ENCODE measurements at regions of chr2 and their contacts with region 1.

Region 1: DNA sequence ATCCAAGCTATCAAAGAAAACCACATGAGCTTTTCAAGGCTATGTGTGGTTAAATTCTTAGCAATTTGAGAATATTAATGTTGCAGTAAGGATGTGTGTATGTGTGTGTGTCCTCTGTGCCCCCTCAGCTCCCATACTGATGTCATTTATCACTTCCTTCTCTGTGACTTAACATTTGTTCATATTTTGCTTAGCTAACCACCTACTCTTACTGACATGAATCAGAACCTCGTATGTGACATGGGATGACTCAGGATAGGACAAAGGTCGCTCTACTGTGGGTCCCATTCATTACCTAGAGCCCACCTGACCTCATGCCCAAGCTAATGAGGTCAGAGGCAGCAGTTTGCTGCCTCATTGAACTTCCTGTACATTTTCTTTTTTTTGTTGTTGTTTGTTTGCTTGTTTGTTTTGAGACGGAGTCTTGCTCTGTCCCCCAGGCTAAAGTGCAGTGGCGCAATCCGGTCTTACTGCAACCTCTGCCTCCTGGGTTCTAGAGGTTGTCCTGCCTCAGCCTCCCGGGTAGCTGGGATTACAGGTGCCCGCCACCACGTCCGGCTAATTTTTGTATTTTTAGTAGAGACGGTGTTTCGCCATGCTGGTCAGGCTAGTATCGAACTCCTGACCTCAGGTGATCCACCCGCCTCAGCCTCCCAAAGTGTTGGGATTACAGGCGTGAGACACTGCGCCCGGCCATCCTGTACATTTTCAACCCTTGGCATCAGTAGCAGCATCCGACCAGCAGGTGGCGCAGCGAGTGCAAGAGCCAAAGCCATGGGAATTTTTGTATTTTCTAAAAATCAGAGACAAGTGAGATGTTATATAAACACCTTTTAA is 36.4 kb downstream of the MOGAT1 start:
- DNase-seq: peak; percentile 63
- H3K4me3 ChIP-seq: no peak overlapping the region
- H3K27ac ChIP-seq: no peak overlapping the region
- H3K4me1 ChIP-seq: no peaks in the 10 kb centered on the region
- H3K27me3 ChIP-seq: no peaks in the 10 kb centered on the region
- CTCF ChIP-seq: peak; percentile 94 to 98 (median 95)
- POLR2A ChIP-seq: no peak

Region 2: GRCh38 chr2:222797261-222797660 is 89.4 kb after region 1 on chr2:
- intact Hi-C with region 1: loop called (anchors 10 kb)
- DNase-seq: no peak
- H3K4me3 ChIP-seq: no peak overlapping the region
- H3K27ac ChIP-seq: peak overlapping the region; percentile 45 to 81
- H3K4me1 ChIP-seq: peaks cover 17% of the 10 kb centered on the region
- H3K27me3 ChIP-seq: no peaks in the 10 kb centered on the region
- CTCF ChIP-seq: peak in 2 of 4 experiments; percentile 34 to 42
- POLR2A ChIP-seq: no peak

Region 3: GRCh38 chr2:222861411-222862105 is 153.7 kb after region 1 on chr2:
- intact Hi-C with region 1: loop called (anchors 1 kb)
- DNase-seq: no peak
- H3K4me3 ChIP-seq: peak overlapping the region; percentile 96 to 99
- H3K27ac ChIP-seq: peak overlapping the region; percentile 80 to 92
- H3K4me1 ChIP-seq: peaks cover 2% of the 10 kb centered on the region
- H3K27me3 ChIP-seq: no peaks in the 10 kb centered on the region
- CTCF ChIP-seq: no peak
- POLR2A ChIP-seq: no peak

Region 4: GRCh38 chr2:222903234-222904220 is 195.6 kb after region 1 on chr2:
- intact Hi-C with region 1: loop called (anchors 5 kb)
- DNase-seq: peak; percentile 16
- H3K4me3 ChIP-seq: no peak overlapping the region
- H3K27ac ChIP-seq: no peak overlapping the region
- H3K4me1 ChIP-seq: peaks cover 5% of the 10 kb centered on the region
- H3K27me3 ChIP-seq: no peaks in the 10 kb centered on the region
- CTCF ChIP-seq: peak; percentile 26 to 77 (median 61)
- POLR2A ChIP-seq: no peak

Region 5: DNA sequence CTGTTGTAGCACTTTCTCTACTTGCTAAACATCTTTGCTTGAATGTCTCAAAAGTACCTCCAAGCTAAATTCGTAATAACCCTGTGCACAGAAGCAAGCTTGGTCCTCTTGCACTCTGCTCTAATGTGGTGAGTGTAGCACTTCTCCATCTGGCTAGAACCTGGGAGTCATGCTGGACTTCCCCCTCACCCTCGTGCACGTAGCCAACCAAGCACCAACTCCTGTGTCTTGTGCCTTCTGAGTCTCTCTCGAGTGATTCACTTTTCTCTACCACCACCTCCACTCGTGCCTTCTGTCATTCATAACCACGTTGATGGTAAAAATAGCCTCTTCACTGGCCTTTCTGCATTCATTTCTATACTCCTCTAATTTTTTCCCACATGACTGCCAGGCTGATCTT is 252.2 kb after region 1 on chr2:
- intact Hi-C with region 1: no loop called
- DNase-seq: no peak
- H3K4me3 ChIP-seq: no peak overlapping the region
- H3K27ac ChIP-seq: no peak overlapping the region
- H3K4me1 ChIP-seq: no peaks in the 10 kb centered on the region
- H3K27me3 ChIP-seq: no peaks in the 10 kb centered on the region
- CTCF ChIP-seq: no peak
- POLR2A ChIP-seq: no peak